K562 (cell line): ENCODE measurements at regions of chr4 and their contacts with region 1.

Region 1: GRCh38 chr4:157035471-157035870 is 40.5 kb upstream of the GLRB start:
- DNase-seq: no peak
- ATAC-seq: no peak
- H3K4me3 ChIP-seq: no peak overlapping the region
- H3K27ac ChIP-seq: no peak overlapping the region
- H3K4me1 ChIP-seq: no peaks in the 10 kb centered on the region
- H3K27me3 ChIP-seq: no peaks in the 10 kb centered on the region
- CTCF ChIP-seq: no peak
- EP300 ChIP-seq: no peak
- POLR2A ChIP-seq: no peak
- RAD21 ChIP-seq: no peak

Region 2: GRCh38 chr4:156084373-156084772 is 951.1 kb before region 1 on chr4:
- CTCF ChIA-PET with region 1: no interaction called
- POLR2A ChIA-PET with region 1: no interaction called
- in situ Hi-C with region 1: no loop called
- intact Hi-C with region 1: no loop called
- DNase-seq: no peak
- ATAC-seq: no peak
- H3K4me3 ChIP-seq: no peak overlapping the region
- H3K27ac ChIP-seq: no peak overlapping the region
- H3K4me1 ChIP-seq: no peaks in the 10 kb centered on the region
- H3K27me3 ChIP-seq: no peaks in the 10 kb centered on the region
- CTCF ChIP-seq: no peak
- EP300 ChIP-seq: no peak
- POLR2A ChIP-seq: no peak
- RAD21 ChIP-seq: no peak

Region 3: DNA sequence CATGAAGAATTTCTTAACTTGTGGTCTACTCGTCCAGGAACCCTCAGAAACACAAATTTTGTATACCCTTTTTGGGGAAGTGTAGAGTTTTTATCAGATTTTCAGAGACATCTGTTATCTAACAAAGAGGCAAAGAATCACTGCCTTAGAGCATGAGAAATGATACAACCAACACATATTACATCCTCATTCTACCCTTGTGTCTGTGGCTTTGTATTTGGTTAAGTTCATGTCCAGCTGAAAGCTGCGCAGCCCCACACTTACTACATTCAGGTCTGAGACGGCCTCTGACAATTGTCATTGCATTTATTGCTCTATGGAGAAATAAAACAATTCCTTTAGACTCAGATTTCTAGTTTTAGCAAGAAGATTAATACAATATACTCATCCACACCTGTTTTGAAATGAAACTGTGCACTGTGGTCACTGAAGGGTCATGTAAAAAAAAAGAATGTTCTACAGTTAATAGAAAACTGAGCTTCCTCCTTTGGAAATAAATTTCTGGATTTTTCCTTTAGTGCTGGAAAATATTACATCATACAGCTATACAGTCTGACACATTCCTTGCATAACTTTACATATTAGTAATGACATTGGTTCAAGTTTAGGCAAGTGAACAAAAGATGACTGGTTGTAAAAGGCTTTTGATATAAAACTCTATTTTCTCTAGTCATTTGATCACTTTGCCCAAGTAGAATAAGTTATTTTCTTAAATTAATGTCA is 80.3 kb after region 1 on chr4:
- CTCF ChIA-PET with region 1: no interaction called
- POLR2A ChIA-PET with region 1: no interaction called
- in situ Hi-C with region 1: no loop called
- intact Hi-C with region 1: loop called (anchors 1 kb)
- DNase-seq: no peak
- ATAC-seq: no peak
- H3K4me3 ChIP-seq: no peak overlapping the region
- H3K27ac ChIP-seq: no peak overlapping the region
- H3K4me1 ChIP-seq: no peaks in the 10 kb centered on the region
- H3K27me3 ChIP-seq: no peaks in the 10 kb centered on the region
- CTCF ChIP-seq: no peak
- EP300 ChIP-seq: no peak
- POLR2A ChIP-seq: no peak
- RAD21 ChIP-seq: no peak